AG04450 (cell line): ENCODE measurements at regions of chr18 and their contacts with region 1.

Region 1: DNA sequence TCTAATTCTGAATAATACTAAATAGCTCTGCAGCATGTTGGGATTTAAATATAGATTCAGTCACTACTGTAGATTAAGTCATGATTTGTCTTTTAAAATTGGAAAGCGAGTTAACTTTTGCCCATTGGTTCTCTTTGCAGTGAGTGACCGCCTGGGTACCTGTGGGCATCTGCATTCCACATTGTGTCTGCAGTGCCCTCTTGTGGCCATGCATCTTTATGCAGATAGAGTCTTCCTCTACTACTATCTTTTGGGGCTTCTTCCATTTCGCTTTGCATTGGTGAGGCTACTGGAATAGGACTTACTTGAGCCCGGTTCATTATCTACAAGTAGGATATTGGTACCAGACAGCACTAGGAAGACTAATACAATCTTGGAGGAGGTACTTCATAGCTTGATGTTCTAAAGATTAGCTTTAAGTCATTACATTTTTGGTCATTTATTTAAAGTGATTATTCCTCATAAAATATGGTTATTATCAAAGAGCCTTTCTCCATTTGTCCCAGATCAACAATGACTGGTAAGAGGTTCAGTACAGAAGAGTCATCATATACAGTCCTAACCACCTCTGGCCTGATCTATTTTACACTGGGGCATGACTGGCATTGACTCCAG is 203.0 kb downstream of the SOCS6 start:
- DNase-seq: no peak
- H3K4me3 ChIP-seq: no peak overlapping the region
- H3K27ac ChIP-seq: no peak overlapping the region
- H3K27me3 ChIP-seq: no peaks in the 10 kb centered on the region
- CTCF ChIP-seq: peak; percentile 82

Region 2: DNA sequence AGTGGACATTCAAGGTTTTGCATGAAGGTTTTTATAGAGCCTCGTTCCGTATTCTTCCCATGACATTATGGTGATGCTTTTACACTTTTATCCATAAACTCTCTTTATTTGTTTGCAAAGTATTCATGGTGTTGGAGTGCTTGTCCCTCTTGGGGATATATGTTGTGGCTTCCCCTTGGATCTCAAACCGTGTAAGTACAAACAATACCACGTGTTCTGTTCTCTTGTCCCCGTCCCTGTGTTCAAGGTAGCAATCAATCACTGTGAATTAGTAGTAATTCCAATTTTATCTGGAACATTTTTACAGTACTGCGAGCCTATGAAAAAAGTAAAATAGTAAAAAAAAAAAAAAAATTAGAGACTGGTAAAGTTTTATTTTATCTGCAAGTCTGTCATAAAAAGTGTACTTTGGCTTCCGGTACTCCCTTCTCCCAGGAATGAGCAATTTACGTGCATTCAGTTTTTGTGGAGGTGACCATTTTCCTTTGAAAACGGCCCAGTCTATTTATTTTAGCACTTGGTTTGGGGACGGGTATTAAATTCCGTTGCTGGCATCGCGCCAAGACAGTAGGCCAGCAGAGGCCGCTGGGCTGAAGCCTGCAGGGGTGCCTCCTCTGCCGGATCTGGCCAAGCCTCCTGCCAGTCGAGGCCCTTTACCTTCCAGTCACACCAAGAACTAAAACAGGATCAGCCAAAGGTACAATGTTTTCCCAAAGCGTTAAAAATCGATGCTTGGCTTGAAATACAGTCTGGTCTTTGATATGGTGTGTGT is 27.3 kb before region 1 on chr18:
- CTCF ChIA-PET with region 1: interaction called, 19 read pairs
- POLR2A ChIA-PET with region 1: no interaction called
- DNase-seq: no peak
- H3K4me3 ChIP-seq: peak overlapping the region; percentile 54
- H3K27ac ChIP-seq: no peak overlapping the region
- H3K27me3 ChIP-seq: peaks cover 7% of the 10 kb centered on the region
- CTCF ChIP-seq: peak; percentile 49

Region 3: DNA sequence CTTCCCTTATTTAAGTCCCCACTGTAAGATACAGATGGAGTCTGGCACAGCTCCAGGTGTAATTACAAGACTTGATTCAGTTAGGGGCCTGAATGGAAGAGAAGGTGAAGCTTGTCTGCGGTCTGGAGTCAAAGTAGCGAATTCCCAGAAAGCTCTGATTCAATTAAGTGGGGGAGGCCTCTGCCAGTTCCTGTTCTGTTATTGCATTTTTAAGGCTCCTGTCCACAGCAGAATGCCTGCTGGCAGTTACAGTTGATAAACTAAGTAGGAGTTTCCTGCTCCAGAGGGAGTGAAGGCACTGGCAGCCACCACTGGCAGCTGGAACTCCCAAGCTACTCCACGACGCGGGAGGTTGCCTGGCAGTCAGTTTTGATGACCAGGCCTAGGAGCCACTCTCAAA is 21.9 kb before region 1 on chr18:
- CTCF ChIA-PET with region 1: interaction called, 25 read pairs
- POLR2A ChIA-PET with region 1: no interaction called
- DNase-seq: no peak
- H3K4me3 ChIP-seq: no peak overlapping the region
- H3K27ac ChIP-seq: no peak overlapping the region
- H3K27me3 ChIP-seq: no peaks in the 10 kb centered on the region
- CTCF ChIP-seq: no peak

Region 4: GRCh38 chr18:70758780-70759179 is 266.9 kb after region 1 on chr18:
- CTCF ChIA-PET with region 1: no interaction called
- POLR2A ChIA-PET with region 1: no interaction called
- DNase-seq: no peak
- H3K4me3 ChIP-seq: no peak overlapping the region
- H3K27ac ChIP-seq: no peak overlapping the region
- H3K27me3 ChIP-seq: no peaks in the 10 kb centered on the region
- CTCF ChIP-seq: no peak